Heart right ventricle (tissue), 16 donors: ENCODE measurements at regions of chr3 and their contacts with region 1.

Region 1: DNA sequence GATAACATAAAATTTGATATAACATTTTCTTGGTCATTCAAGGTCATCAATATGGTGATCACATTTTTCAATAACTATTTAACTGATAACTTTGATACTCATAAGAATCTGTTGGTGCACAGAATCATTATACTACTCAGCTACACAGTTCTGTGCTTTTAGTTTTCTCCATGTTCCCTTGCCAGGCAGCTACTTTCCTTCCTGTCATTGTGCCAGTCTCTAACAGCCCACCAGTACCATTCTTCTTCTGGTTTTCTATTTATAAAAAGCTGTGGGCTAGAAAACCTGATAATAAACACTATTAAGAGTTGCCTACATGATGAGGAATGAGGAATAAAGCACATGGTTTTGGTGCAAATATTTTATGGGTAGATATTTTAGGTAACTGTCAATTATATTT is 77.6 kb downstream of the C3orf80 start:
- DNase-seq: no peak
- ATAC-seq: no peak
- H3K4me3 ChIP-seq: no peak overlapping the region
- H3K27ac ChIP-seq: no peak overlapping the region
- H3K4me1 ChIP-seq: no peaks in the 10 kb centered on the region
- H3K27me3 ChIP-seq: no peaks in the 10 kb centered on the region
- CTCF ChIP-seq: no peak

Region 2: DNA sequence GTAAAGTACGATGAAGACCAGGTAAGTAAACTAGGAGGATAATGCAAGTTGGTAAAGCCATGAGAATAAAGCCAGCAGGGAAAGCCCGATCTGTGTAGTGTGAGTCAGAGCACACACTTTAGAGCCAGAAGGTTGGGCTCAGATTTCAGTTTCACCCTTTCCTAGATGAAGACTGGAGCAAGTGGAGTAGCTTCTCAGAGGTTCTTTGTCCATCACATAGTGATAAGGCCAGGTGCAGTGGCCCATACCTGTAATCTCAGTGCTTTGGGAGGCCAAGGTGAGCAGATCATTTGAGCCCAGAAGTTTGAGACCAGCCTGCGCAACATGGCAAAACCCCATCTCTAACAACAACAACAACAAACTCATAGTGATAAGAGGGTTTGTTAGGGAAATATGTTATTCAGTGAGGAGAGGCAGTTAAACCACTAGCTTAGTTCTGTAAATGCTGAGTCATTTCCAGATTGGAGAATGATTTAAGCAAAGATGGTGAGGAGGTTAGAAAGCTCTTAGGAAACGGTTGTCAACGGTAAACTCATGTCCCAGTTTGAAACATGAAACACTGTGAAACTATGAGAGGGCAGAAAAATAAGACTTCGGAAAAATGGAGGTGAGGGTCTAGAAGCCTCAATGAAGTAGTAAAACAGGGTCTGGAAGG is 275.1 kb before region 1 on chr3:
- intact Hi-C with region 1: no loop called
- DNase-seq: no peak
- ATAC-seq: no peak
- H3K4me3 ChIP-seq: no peak overlapping the region
- H3K27ac ChIP-seq: no peak overlapping the region
- H3K4me1 ChIP-seq: peaks cover 0 to 11% (median 0%) of the 10 kb centered on the region in 9 donors
- H3K27me3 ChIP-seq: peaks cover 0 to 2% (median 0%) of the 10 kb centered on the region in 7 donors
- CTCF ChIP-seq: no peak

Region 3: DNA sequence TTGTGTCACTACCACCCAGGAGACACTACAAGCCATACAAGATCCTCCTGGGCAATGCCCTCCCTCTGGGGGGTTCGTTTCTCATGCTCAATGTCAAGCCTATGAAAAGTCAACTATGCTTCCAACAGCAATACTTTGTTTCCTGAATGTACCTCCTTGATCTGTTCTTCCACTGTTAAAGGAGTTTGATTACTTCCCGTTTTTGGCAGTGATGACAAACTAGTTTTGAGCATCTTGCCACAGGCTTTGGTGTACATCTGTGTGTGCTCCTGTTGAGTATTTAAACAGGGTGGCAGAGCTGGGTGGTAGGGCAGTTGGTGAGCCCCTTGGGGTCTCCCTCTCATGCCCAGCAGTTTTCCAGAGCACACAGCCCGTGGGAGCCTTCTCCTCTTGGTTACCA is 232.8 kb before region 1 on chr3:
- intact Hi-C with region 1: no loop called
- DNase-seq: no peak
- ATAC-seq: no peak
- H3K4me3 ChIP-seq: no peak overlapping the region
- H3K27ac ChIP-seq: no peak overlapping the region
- H3K4me1 ChIP-seq: no peaks in the 10 kb centered on the region
- H3K27me3 ChIP-seq: peaks cover 0 to 10% (median 0%) of the 10 kb centered on the region in 7 donors
- CTCF ChIP-seq: no peak

Region 4: GRCh38 chr3:160319322-160319721 is 16.5 kb after region 1 on chr3:
- intact Hi-C with region 1: loop called in 1 of 10 experiments (anchors 2 kb)
- DNase-seq: no peak
- ATAC-seq: no peak
- H3K4me3 ChIP-seq: no peak overlapping the region
- H3K27ac ChIP-seq: no peak overlapping the region
- H3K4me1 ChIP-seq: no peaks in the 10 kb centered on the region
- H3K27me3 ChIP-seq: no peaks in the 10 kb centered on the region
- CTCF ChIP-seq: no peak